Panc1 (cell line): ENCODE measurements at regions of chr15 and their contacts with region 1.

Region 1: DNA sequence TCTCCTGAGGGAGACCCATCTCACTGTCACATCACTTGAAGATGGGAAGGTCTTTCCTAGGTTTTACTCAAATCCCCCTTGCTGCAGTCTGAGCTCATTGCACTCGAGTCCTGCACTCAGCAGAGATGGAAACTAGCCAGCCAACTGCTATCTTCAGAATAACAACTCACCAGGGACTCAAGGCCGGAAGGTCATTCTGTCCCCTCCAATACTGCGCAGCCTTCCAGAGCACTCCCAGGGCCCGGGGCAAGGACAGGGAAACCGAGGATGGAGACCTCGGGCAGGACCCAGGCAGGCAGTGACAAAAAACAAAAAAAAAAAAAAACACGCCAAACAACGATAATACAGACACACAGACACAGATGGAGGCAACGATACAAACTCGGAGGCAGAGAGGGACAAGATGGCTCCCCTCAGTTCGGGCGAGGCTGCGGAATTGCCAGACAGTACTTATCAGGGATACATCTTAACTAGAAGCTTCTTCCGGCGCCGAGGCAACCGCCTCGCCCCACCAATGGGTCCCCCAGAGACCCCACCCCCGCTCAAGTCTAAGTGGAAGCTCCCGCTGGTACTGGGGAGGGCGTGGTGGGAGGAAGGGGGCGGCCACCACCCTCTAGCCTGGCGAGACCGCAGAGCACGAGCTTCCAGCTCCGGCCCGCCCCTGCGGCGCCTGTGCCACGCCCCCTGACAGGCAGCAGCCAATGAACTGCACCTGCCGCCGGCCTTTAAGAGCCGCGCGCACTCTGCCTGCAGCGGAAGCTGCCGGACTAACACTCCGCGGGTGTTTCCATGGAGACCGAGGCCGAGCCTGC is 7.0 kb upstream of the MAP1A start:
- DNase-seq: peak; percentile 78
- ATAC-seq: peak; percentile 99
- H3K4me3 ChIP-seq: peak overlapping the region; percentile 79 to 85
- H3K27ac ChIP-seq: peak overlapping the region; percentile 93
- H3K4me1 ChIP-seq: peaks cover 7% of the 10 kb centered on the region; the same call in 1 of the 2 replicates
- H3K27me3 ChIP-seq: no peaks in the 10 kb centered on the region; the same call in 1 of the 2 replicates
- CTCF ChIP-seq: no peak

Region 2: DNA sequence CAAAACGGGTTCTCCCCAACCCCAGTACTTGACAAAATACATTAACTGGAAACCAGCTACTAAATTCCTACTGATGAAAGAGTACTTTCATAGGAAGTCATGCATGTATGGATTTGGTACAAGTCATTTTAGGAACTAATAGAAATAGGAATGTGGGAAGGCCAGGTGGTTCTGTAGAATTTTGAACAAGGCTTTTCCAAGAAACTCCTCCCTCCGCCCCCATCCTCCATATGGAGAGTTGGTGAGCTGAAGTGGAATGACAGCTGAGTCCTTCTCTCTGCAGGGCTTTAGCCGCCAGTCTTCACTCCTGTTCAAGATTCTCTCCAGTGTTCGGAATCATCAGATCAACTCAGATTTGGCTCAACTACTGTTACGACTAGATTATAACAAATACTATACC is 106.3 kb before region 1 on chr15:
- CTCF ChIA-PET with region 1: no interaction called
- POLR2A ChIA-PET with region 1: no interaction called
- in situ Hi-C with region 1: no loop called
- intact Hi-C with region 1: no loop called
- DNase-seq: no peak
- ATAC-seq: no peak
- H3K4me3 ChIP-seq: no peak overlapping the region
- H3K27ac ChIP-seq: no peak overlapping the region
- H3K4me1 ChIP-seq: no peaks in the 10 kb centered on the region
- H3K27me3 ChIP-seq: no peaks in the 10 kb centered on the region
- CTCF ChIP-seq: no peak

Region 3: DNA sequence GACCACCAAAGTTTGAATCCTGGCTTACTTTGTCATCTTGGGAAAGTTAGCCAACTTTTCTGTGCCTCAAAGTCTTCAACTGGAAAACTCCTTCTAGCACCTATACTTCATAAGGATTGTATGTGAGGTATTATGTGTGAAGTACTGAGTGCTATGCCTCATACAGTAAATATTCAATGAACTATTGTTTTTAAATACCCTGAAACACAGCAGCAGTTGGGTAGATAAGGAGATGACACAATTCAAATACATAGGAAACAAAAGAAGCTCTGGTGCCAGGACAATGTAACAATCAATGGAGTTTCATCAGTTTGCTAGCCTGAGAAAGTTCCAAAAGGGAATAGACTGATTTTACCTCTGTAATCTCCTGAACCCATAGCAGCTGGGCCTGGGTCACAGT is 96.2 kb before region 1 on chr15:
- CTCF ChIA-PET with region 1: no interaction called
- POLR2A ChIA-PET with region 1: no interaction called
- in situ Hi-C with region 1: no loop called
- intact Hi-C with region 1: no loop called
- DNase-seq: no peak
- ATAC-seq: no peak
- H3K4me3 ChIP-seq: no peak overlapping the region
- H3K27ac ChIP-seq: no peak overlapping the region
- H3K4me1 ChIP-seq: no peaks in the 10 kb centered on the region
- H3K27me3 ChIP-seq: no peaks in the 10 kb centered on the region
- CTCF ChIP-seq: no peak

Region 4: GRCh38 chr15:43492673-43493601 is 17.5 kb before region 1 on chr15 and contains the start of gene TP53BP1:
- CTCF ChIA-PET with region 1: interaction called, 4 read pairs
- POLR2A ChIA-PET with region 1: interaction called, 18 read pairs
- in situ Hi-C with region 1: no loop called
- intact Hi-C with region 1: no loop called
- DNase-seq: peak; percentile 83
- ATAC-seq: peak; percentile 100
- H3K4me3 ChIP-seq: peak within 1 kb of the TSS; percentile 70 to 94
- H3K27ac ChIP-seq: peak within 1 kb of the TSS; percentile 92
- H3K4me1 ChIP-seq: peaks cover 20% of the 10 kb centered on the region
- H3K27me3 ChIP-seq: no peaks in the 10 kb centered on the region
- CTCF ChIP-seq: no peak
- total RNA-seq, gene TP53BP1: 80.3 TPM

Region 5: DNA sequence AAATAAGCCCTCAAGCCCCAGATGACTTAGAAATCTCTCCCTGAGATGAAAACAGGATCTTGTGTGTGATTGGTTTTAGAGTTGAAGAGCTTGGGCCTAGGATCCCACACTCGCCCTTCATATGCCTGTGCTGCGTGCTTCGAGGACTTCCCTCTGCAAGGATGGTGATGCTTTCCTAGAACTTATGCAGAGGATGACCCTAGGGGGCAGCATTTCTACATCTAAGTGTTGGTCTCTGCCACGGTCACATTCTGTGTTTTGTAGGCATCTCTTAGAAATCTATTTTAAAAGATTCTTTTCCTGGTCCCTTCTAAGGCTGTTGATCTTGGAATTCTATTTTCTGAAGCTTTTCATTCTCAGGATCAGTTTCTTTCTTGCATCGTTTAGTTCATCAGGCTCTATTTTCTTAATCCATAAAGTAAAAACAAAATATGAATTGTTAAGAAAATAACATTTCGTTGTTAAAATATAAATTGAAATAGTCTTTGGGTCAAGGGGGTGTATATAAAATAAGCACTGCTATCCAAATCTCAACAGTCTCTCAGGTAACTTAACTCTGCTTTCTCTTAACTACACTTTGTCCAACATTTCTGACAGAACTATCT is 362.1 kb after region 1 on chr15:
- CTCF ChIA-PET with region 1: no interaction called
- POLR2A ChIA-PET with region 1: no interaction called
- in situ Hi-C with region 1: no loop called
- intact Hi-C with region 1: no loop called
- DNase-seq: peak; percentile 38
- ATAC-seq: peak; percentile 92
- H3K4me3 ChIP-seq: no peak overlapping the region
- H3K27ac ChIP-seq: no peak overlapping the region
- H3K4me1 ChIP-seq: no peaks in the 10 kb centered on the region
- H3K27me3 ChIP-seq: no peaks in the 10 kb centered on the region
- CTCF ChIP-seq: peak; percentile 81